ENCODE measurements at regions of chr13 and their contacts with region 1.

Region 1: DNA sequence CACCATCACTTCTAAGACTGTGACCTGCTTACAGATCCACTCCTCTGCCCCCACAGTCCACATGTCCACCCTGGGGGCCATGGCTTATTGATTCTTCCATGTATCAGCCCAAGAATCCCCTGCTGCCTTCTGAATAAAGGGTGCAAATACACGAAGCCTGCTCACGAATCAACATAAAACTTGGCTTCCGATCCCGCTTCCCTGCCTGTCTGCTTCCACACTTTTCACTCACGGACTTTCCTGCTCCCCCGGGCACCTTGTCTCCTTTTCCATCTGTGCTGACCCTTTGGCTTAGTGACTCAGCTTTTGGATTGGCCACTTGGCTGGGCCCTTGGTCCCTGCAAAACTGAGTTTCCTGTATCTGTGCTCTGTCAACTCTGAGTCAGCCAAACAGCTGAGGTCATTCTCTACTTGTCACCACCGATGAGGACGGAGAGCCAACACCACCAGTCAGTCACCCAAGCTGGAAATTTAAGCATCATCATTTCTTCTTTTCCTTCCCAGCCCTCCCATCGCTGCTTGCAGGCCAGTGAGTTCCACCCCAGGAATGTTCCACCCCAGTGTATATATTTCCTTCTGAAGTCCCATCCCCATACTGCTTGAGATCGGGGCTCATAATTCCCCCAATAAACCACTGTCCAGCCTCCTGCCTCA is 11.4 kb upstream of the USP12 start:
- DNase-seq: peak; percentile 95
- ATAC-seq: peak; percentile 92
- H3K4me3 ChIP-seq: no peak overlapping the region
- H3K27ac ChIP-seq: peak overlapping the region; percentile 58
- H3K4me1 ChIP-seq: peaks cover 3% of the 10 kb centered on the region
- H3K27me3 ChIP-seq: no peaks in the 10 kb centered on the region
- CTCF ChIP-seq: no peak
- POLR2A ChIP-seq: no peak
- RAD21 ChIP-seq: no peak; the same call in none of the 2 replicates

Region 2: GRCh38 chr13:26518451-26518959 is 664.5 kb before region 1 on chr13:
- CTCF ChIA-PET with region 1: no interaction called
- POLR2A ChIA-PET with region 1: no interaction called
- dilution Hi-C with region 1: no loop called
- in situ Hi-C with region 1: no loop called
- intact Hi-C with region 1: no loop called
- DNase-seq: no peak
- ATAC-seq: no peak
- H3K4me3 ChIP-seq: no peak overlapping the region
- H3K27ac ChIP-seq: no peak overlapping the region
- H3K4me1 ChIP-seq: no peaks in the 10 kb centered on the region
- H3K27me3 ChIP-seq: peaks cover 16% of the 10 kb centered on the region
- CTCF ChIP-seq: no peak
- POLR2A ChIP-seq: no peak
- RAD21 ChIP-seq: no peak

Region 3: GRCh38 chr13:27161980-27162379 is 21.0 kb before region 1 on chr13:
- CTCF ChIA-PET with region 1: no interaction called
- POLR2A ChIA-PET with region 1: no interaction called
- dilution Hi-C with region 1: no loop called
- in situ Hi-C with region 1: no loop called
- intact Hi-C with region 1: no loop called
- DNase-seq: peak; percentile 35
- ATAC-seq: no peak
- H3K4me3 ChIP-seq: no peak overlapping the region
- H3K27ac ChIP-seq: no peak overlapping the region
- H3K4me1 ChIP-seq: peaks cover 3% of the 10 kb centered on the region; the same call in 1 of the 2 replicates
- H3K27me3 ChIP-seq: no peaks in the 10 kb centered on the region
- CTCF ChIP-seq: no peak
- POLR2A ChIP-seq: no peak
- RAD21 ChIP-seq: no peak

Region 4: DNA sequence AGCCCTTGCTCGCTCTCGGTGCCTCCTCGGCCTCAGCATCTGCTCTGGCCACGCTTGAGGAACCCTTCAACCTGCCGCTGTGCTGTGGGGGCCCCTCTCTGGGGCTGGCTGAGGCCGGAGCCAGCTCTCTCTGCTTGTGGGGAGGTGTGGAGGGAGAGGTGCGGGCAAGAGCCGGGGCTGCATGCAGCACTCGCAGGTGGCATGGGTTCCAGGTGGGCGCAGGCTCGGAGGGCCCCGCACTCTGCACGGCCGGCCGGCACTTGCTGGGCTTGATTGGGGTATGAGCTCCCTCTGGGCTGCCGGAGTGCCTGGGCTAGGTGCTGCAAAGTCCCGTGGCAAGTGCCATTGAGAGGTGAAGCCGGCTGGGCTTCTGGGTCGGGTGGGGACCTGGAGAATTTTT is 36.6 kb after region 1 on chr13:
- CTCF ChIA-PET with region 1: no interaction called
- POLR2A ChIA-PET with region 1: no interaction called
- dilution Hi-C with region 1: no loop called
- in situ Hi-C with region 1: no loop called
- intact Hi-C with region 1: loop called (anchors 5 kb)
- DNase-seq: no peak
- ATAC-seq: no peak
- H3K4me3 ChIP-seq: no peak overlapping the region
- H3K27ac ChIP-seq: no peak overlapping the region
- H3K4me1 ChIP-seq: no peaks in the 10 kb centered on the region
- H3K27me3 ChIP-seq: no peaks in the 10 kb centered on the region; the same call in 1 of the 2 replicates
- CTCF ChIP-seq: no peak
- POLR2A ChIP-seq: no peak
- RAD21 ChIP-seq: no peak

Measured in IMR-90 (cell line).